Heart right ventricle (tissue), 16 donors: ENCODE measurements at regions of chr5 and their contacts with region 1.

Region 1: DNA sequence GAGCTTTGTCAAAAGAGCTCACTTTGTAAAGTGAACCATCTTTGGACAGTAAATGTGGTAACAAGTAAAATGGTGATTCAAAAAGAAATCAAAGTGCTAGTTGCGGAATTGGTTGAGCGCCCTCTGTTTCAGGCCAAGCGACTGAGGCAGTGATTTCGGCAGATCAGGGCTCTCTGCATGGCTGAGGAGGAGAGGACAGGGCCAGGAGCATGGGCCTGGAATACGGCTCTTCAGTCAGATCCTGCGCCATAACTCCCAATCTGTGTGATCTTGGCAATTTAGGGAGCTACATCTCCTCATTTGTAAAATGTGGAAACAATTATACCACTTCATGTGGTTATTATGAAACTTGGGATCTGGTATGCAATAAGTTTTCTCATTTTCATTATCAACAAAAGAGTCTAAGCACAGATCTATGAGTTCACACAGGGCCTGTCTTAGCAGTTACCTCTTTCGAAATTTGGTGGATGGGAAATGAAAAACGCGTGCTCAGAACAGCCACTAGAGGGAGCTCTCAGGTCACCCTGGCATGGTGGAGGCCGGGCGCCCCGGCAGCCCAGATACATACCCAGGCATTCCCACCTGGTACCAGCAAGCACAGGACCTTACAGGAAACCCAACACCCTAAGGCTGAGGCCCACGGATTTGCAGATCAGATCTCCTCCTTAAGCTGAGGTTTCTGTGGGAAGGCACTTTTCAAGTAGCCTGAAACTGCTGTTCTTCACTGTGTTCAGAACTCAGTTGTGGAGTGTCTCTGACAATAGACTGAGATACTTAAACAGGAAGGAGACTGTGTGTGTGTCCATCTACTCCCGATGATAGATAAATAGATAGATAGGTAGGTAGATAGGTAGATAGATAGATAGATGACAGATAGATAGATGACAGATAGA is 303.7 kb downstream of the RAB3C start:
- DNase-seq: peak; percentile 46 to 56
- ATAC-seq: peak; percentile 36 to 80 (median 50)
- H3K4me3 ChIP-seq: no peak overlapping the region
- H3K27ac ChIP-seq: peak overlapping the region in 1 of 10 donors; percentile 64
- H3K4me1 ChIP-seq: peaks cover 0 to 17% (median 8%) of the 10 kb centered on the region in 9 donors
- H3K27me3 ChIP-seq: no peaks in the 10 kb centered on the region
- CTCF ChIP-seq: peak; percentile 83 to 93 (median 88)

Region 2: GRCh38 chr5:58993461-58993860 is 106.9 kb after region 1 on chr5:
- intact Hi-C with region 1: loop called in 1 of 10 experiments (anchors 5 kb)
- DNase-seq: no peak
- ATAC-seq: no peak
- H3K4me3 ChIP-seq: no peak overlapping the region
- H3K27ac ChIP-seq: no peak overlapping the region
- H3K4me1 ChIP-seq: no peaks in the 10 kb centered on the region
- H3K27me3 ChIP-seq: no peaks in the 10 kb centered on the region
- CTCF ChIP-seq: no peak

Region 3: DNA sequence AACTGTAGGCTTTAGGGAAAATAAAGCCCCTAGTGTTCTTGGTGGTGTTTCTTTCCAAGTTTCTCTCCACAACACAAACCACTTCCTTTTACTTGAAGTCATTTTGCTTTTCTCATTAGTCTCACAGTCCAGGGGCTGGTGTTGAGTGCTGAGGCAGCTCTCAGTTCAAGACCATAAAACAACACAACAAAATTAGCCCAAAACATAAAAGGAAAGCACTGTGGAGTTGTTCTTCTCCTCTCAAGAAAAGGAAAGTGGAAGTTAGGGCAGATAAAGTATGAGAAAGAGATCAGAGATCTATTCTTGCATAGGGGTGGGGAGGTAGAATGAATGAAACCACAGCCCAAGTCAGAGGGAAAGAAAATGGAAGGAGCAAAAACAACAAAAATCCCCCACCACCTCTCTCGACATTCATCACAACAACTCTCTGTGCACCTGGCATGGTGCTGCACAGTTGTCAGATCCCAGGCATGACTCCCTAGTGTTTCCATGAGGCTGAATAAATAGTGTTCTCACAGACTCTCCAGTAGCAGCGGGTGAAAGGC is 266.2 kb after region 1 on chr5:
- intact Hi-C with region 1: loop called in 1 of 10 experiments (anchors 10 kb)
- DNase-seq: no peak
- ATAC-seq: peak in 2 of 8 donors; percentile 31 to 34
- H3K4me3 ChIP-seq: no peak overlapping the region
- H3K27ac ChIP-seq: no peak overlapping the region
- H3K4me1 ChIP-seq: peaks cover 0 to 25% (median 5%) of the 10 kb centered on the region in 9 donors
- H3K27me3 ChIP-seq: no peaks in the 10 kb centered on the region
- CTCF ChIP-seq: no peak

Region 4: GRCh38 chr5:59174248-59174844 is 287.8 kb after region 1 on chr5:
- intact Hi-C with region 1: loop called in 9 of 10 experiments (anchors 2 to 10 kb)
- DNase-seq: peak in 1 of 2 donors; percentile 32
- ATAC-seq: peak; percentile 63 to 86 (median 78)
- H3K4me3 ChIP-seq: no peak overlapping the region
- H3K27ac ChIP-seq: no peak overlapping the region
- H3K4me1 ChIP-seq: peaks cover 0 to 17% (median 0%) of the 10 kb centered on the region in 9 donors
- H3K27me3 ChIP-seq: no peaks in the 10 kb centered on the region
- CTCF ChIP-seq: peak; percentile 62 to 90 (median 85)

Region 5: GRCh38 chr5:59367791-59368394 is 481.3 kb after region 1 on chr5:
- intact Hi-C with region 1: loop called in 3 of 10 experiments (anchors 5 to 10 kb)
- DNase-seq: peak in 1 of 2 donors; percentile 70
- ATAC-seq: peak in 7 of 8 donors; percentile 41 to 86 (median 72)
- H3K4me3 ChIP-seq: no peak overlapping the region
- H3K27ac ChIP-seq: no peak overlapping the region
- H3K4me1 ChIP-seq: peaks cover 0 to 8% (median 0%) of the 10 kb centered on the region in 9 donors
- H3K27me3 ChIP-seq: no peaks in the 10 kb centered on the region
- CTCF ChIP-seq: peak; percentile 50 to 89 (median 83)

Region 6: GRCh38 chr5:59799668-59800346 is 913.2 kb after region 1 on chr5:
- intact Hi-C with region 1: loop called in 1 of 10 experiments (anchors 10 kb)
- DNase-seq: no peak
- ATAC-seq: peak in 7 of 8 donors; percentile 65 to 83 (median 75)
- H3K4me3 ChIP-seq: peak overlapping the region in 5 of 10 donors; percentile 2 to 30 (median 11)
- H3K27ac ChIP-seq: peak overlapping the region in 7 of 10 donors; percentile 1 to 43 (median 23)
- H3K4me1 ChIP-seq: peaks cover 0 to 28% (median 15%) of the 10 kb centered on the region in 9 donors
- H3K27me3 ChIP-seq: no peaks in the 10 kb centered on the region
- CTCF ChIP-seq: peak; percentile 57 to 86 (median 80)